ENCODE measurements at regions of chr6 and their contacts with region 1.

Region 1: GRCh38 chr6:105207524-105208269 is 27.9 kb upstream of the POPDC3 start:
- DNase-seq: no peak
- CTCF ChIP-seq: no peak

Region 2: GRCh38 chr6:105192707-105193465 is 14.8 kb before region 1 on chr6:
- CTCF ChIA-PET with region 1: interaction called, 12 read pairs
- POLR2A ChIA-PET with region 1: no interaction called
- DNase-seq: no peak
- CTCF ChIP-seq: no peak

Region 3: DNA sequence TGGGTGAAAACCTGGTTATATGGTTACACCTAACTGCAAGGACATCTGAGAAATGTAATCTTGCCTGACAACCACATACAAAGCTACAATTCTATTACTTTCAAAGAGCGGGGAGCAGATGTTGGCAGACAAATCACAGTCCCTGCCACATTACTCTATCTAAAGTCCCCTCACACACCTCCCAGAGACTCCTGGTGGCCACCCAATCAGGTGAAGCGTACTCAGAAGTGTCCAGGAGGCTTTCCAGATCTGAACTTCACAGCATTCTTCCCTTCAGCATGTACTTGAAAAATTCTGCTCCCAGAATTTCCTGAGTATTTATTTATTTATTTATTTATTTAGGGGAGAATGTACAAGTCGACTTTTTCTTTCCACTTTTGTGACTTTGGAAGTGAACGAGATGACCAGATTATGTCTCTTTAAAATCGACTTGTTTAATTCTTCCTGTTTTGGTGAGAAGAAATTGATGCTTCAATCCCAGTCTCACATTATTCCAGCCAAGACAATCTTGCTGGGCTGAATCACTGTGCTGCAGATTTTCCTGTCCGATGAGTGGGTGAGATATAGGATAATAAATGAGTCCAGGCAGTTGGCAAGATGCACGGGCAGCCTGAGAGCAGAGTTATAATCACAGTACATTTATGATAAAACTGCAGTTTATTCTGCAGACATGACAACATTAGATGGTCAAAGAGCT is 19.0 kb after region 1 on chr6:
- CTCF ChIA-PET with region 1: no interaction called
- POLR2A ChIA-PET with region 1: no interaction called
- DNase-seq: no peak
- CTCF ChIP-seq: no peak